A549 (cell line): ENCODE measurements at regions of chr17 and their contacts with region 1.

Region 1: GRCh38 chr17:31524926-31525800 is 133.7 kb downstream of the RAB11FIP4 start:
- DNase-seq: peak; percentile 87 to 96
- ATAC-seq: peak; percentile 81 to 95
- H3K4me3 ChIP-seq: peak overlapping the region; percentile 39
- H3K27ac ChIP-seq: peak overlapping the region; percentile 34 to 62; a peak in 3 of 6 replicates
- H3K4me1 ChIP-seq: no peaks in the 10 kb centered on the region
- CTCF ChIP-seq: peak; percentile 97
- EP300 ChIP-seq: no peak
- POLR2A ChIP-seq: no peak
- RAD21 ChIP-seq: peak; percentile 97

Region 2: DNA sequence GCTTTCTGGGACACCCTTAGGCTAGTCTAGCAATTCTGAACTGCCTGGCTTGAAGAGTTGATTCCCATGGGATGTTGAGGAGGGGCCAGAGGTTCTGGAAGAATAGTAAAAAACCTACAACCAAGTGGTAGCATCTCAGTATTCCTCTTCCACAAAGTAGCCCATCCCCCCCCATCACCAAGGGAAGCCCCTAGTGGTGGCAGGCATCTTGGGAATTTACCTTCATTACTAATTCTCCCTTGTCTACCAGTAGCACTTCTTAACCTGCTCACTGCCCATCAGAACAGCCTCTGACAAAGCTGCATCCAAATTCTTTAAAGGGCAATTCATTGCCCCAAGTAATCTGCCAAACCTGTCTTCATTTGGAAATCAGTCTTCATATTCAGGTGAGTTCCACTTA is 146.5 kb before region 1 on chr17:
- CTCF ChIA-PET with region 1: interaction called, 197 read pairs
- POLR2A ChIA-PET with region 1: no interaction called
- DNase-seq: no peak
- ATAC-seq: peak; percentile 12 to 63; a peak in 3 of 6 replicates
- H3K4me3 ChIP-seq: no peak overlapping the region
- H3K27ac ChIP-seq: no peak overlapping the region
- H3K4me1 ChIP-seq: no peaks in the 10 kb centered on the region
- CTCF ChIP-seq: no peak
- EP300 ChIP-seq: no peak
- POLR2A ChIP-seq: no peak
- RAD21 ChIP-seq: no peak

Region 3: DNA sequence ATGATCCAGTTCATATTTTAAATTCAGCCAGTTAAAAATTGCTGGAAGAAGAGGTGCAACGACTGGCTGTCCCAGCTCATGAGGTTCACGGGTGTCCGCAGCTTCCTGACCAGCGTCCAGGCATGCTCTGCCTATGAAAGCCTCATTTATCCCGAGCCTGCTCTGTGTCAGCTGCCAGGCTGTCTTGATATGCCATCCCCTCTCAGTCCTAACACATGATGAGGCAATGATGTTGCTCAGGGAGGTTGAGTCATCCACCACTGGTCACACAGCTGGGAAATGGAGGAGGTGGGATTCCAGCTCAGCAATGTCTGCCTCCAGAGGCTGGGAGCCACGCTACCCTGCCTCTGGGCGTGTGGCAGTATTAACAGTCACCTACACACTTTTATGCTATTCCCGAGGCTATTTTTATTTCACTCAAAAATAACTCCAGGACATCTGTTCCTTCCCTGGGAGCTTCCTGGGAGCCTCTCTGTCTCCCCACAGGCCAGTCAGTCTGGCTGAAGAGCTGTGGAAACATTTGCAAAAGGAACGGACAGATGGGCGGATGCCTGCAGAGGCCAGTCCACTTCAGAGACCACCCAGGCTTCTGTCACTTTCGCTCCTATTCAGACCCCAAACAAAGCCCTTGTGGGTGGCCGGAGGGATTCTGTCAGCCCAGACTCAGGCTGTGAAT is 111.2 kb before region 1 on chr17:
- CTCF ChIA-PET with region 1: interaction called, 29 read pairs
- POLR2A ChIA-PET with region 1: no interaction called
- DNase-seq: no peak
- ATAC-seq: peak in 1 of 2 experiments; percentile 34; a peak in 3 of 6 replicates
- H3K4me3 ChIP-seq: no peak overlapping the region
- H3K27ac ChIP-seq: no peak overlapping the region
- H3K4me1 ChIP-seq: no peaks in the 10 kb centered on the region; the same call in 2 of the 3 replicates
- CTCF ChIP-seq: no peak
- EP300 ChIP-seq: no peak
- POLR2A ChIP-seq: no peak
- RAD21 ChIP-seq: no peak

Region 4: GRCh38 chr17:31448467-31449077 is 76.6 kb before region 1 on chr17:
- CTCF ChIA-PET with region 1: interaction called, 490 read pairs
- POLR2A ChIA-PET with region 1: no interaction called
- DNase-seq: no peak
- ATAC-seq: no peak
- H3K4me3 ChIP-seq: no peak overlapping the region
- H3K27ac ChIP-seq: no peak overlapping the region
- H3K4me1 ChIP-seq: no peaks in the 10 kb centered on the region
- CTCF ChIP-seq: no peak
- EP300 ChIP-seq: no peak
- POLR2A ChIP-seq: no peak
- RAD21 ChIP-seq: no peak

Region 5: DNA sequence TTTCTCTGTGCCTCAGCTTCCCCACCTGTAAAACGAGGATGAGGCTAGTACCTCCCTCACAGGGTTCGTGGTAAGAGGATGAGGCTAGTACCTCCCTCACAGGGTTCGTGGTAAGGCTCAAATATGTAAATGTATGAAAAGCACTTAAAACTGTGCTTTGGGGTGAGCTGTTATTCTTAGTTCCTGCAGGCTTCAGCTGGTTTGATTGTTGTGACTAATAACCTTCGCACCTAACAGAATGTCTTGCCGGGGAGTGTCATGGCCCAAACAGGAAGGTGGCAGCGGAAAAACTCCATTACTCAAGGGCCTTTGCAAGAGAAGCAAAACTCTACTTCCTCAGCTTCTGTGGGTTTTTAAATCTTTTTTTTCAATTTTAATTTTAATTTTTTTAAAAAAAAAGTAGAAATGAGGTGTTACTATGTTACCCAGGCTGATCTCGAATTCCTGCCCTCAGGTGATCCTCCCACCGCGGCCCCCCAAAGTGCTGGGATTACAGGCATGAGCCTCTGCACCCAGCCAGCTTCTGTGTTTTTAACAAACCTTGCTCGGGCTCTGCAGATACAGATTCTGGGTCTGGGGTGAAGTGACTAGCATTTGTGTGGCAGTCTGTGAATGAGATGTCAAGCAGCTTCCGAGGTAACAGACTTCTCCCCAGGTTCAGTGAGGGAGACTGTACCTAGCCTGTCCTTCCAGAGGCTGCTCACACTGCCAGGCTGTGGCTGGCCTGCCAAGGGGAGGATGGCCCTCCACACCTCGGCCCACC is 30.7 kb before region 1 on chr17:
- CTCF ChIA-PET with region 1: interaction called, 19 read pairs
- POLR2A ChIA-PET with region 1: no interaction called
- DNase-seq: no peak
- ATAC-seq: no peak
- H3K4me3 ChIP-seq: no peak overlapping the region
- H3K27ac ChIP-seq: no peak overlapping the region
- H3K4me1 ChIP-seq: no peaks in the 10 kb centered on the region
- CTCF ChIP-seq: no peak
- EP300 ChIP-seq: no peak
- POLR2A ChIP-seq: no peak
- RAD21 ChIP-seq: no peak

Region 6: DNA sequence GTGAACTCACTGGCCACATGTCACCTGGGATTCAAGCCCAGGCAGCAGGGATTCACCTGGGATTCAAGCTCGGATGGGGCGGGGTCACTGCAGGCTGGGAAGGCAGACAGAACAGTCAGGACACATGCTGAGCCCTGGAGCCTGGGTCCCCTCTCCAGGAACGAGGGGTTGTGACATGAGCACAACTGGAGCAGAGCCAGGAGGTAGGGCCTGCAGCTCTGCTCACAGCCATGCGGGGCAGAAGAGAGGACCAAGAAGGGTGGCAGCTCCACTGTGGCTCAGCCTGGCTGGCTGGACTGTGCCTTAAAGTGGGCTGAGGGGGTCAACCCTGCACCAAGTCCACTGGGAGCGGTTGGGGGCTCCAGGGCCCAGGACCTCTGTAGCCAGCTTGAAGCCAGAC is 16.4 kb after region 1 on chr17:
- CTCF ChIA-PET with region 1: interaction called, 127 read pairs
- POLR2A ChIA-PET with region 1: no interaction called
- DNase-seq: peak in 1 of 2 experiments; percentile 42
- ATAC-seq: peak; percentile 75 to 82
- H3K4me3 ChIP-seq: no peak overlapping the region
- H3K27ac ChIP-seq: no peak overlapping the region
- H3K4me1 ChIP-seq: no peaks in the 10 kb centered on the region
- CTCF ChIP-seq: no peak
- EP300 ChIP-seq: no peak
- POLR2A ChIP-seq: no peak
- RAD21 ChIP-seq: no peak

Region 7: DNA sequence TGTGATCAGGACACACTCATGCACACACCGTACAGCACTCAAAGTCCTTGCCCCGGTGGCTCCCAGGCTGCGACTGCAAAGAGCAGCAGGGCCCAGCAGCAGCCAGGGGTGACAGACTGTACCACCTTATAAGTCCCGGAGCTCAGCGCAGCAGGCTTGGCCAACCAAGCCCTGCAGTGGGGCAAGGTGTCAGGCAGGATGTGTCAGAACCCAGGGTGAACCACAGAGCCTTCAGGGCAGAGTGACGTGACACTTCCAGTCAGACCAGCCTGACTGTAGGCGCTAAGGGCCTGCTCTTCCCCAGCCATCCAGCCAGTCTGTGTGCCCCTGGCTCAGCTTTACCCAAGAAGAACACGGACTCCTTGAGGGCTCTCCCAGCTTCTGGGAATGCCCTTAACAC is 129.8 kb after region 1 on chr17:
- CTCF ChIA-PET with region 1: no interaction called
- POLR2A ChIA-PET with region 1: no interaction called
- DNase-seq: no peak
- ATAC-seq: peak in 1 of 2 experiments; percentile 24; a peak in 2 of 6 replicates
- H3K4me3 ChIP-seq: no peak overlapping the region
- H3K27ac ChIP-seq: no peak overlapping the region
- H3K4me1 ChIP-seq: no peaks in the 10 kb centered on the region
- CTCF ChIP-seq: no peak
- EP300 ChIP-seq: no peak
- POLR2A ChIP-seq: no peak
- RAD21 ChIP-seq: no peak